ENCODE measurements at regions of chr10 and their contacts with region 1.

Region 1: DNA sequence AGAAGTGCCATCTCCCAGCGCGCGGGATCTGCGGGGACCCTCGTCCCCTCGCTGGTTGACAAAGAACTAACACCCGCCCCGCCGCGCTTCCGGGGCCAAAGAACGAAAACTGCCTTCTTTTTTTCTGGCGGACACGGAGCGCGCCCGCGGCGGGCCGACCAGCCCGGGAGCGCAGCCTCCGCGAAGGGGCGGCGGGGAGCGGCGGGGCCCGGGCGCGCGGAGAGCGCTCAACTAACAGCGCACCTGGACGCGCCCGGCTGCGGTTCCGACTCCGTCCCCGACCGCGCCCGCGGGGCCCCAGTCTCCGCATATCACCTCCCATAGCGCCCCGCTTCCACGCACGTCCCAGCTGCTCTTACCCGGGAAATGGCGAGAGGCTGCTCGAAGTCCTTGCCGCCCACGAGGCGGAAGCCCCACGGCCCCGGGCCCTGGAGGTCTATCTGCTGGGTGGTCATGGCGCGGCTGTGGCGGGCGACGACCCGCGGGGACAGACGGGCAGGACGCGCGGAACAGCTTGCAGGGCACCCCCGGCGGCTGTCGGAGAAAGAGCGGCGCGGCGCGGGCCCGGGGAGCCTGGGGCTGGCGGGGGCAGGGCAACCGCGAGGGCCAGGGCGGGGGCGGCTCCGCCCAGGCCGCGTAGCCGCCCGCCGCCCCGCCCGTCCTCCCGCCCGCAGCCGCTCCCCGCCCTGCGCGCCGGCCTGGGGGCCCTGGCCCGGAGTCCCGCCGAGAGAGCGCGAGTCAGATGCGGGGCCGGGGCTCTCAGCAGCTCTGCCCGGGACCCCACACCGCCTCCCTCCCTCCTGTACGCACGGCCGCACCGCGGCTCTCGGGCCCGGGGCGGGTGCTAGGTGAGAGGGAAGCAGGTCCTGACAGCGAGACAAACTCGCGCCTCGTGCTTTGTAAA is at the start of gene PDLIM1:
- DNase-seq: peak; percentile 55
- ATAC-seq: peak; percentile 92
- H3K4me3 ChIP-seq: peak within 1 kb of the TSS; percentile 77 to 89 (median 88)
- H3K27ac ChIP-seq: peak within 1 kb of the TSS; percentile 83
- H3K4me1 ChIP-seq: peaks cover 57% of the 10 kb centered on the region
- H3K27me3 ChIP-seq: no peaks in the 10 kb centered on the region
- CTCF ChIP-seq: peak; percentile 50
- EP300 ChIP-seq: no peak
- POLR2A ChIP-seq: peak; percentile 56 to 71; a peak in 3 of 4 replicates
- RAD21 ChIP-seq: peak; percentile 74
- total RNA-seq, gene PDLIM1: 123 and 183 TPM in 2 replicates

Region 2: GRCh38 chr10:94757916-94758315 is 532.8 kb before region 1 on chr10:
- CTCF ChIA-PET with region 1: no interaction called
- POLR2A ChIA-PET with region 1: no interaction called
- in situ Hi-C with region 1: no loop called
- intact Hi-C with region 1: no loop called
- DNase-seq: no peak
- ATAC-seq: no peak
- H3K4me3 ChIP-seq: no peak overlapping the region
- H3K27ac ChIP-seq: no peak overlapping the region
- H3K4me1 ChIP-seq: no peaks in the 10 kb centered on the region
- H3K27me3 ChIP-seq: no peaks in the 10 kb centered on the region
- CTCF ChIP-seq: no peak
- EP300 ChIP-seq: no peak
- POLR2A ChIP-seq: no peak
- RAD21 ChIP-seq: no peak

Region 3: DNA sequence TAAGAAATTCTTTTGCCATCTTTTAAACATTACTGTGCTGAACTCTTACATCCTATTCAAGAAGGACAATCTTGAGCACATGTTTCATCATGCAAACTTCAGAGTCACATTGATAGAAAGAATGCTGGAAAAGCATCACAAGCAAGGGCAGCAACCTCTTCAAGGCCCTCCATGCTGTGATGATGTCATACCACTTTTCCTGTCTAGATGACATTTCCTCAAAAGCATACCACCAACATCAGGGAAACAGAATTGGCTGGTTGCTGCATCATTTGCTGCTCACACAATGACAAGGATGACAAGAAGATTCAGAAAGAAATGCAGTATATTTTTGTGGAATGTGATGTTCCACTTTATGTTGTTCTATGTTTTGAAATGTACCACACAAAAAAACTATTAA is 259.1 kb before region 1 on chr10:
- CTCF ChIA-PET with region 1: no interaction called
- POLR2A ChIA-PET with region 1: no interaction called
- in situ Hi-C with region 1: no loop called
- intact Hi-C with region 1: no loop called
- DNase-seq: no peak
- ATAC-seq: no peak
- H3K4me3 ChIP-seq: no peak overlapping the region
- H3K27ac ChIP-seq: no peak overlapping the region
- H3K4me1 ChIP-seq: no peaks in the 10 kb centered on the region
- H3K27me3 ChIP-seq: no peaks in the 10 kb centered on the region
- CTCF ChIP-seq: no peak
- EP300 ChIP-seq: no peak
- POLR2A ChIP-seq: no peak
- RAD21 ChIP-seq: no peak

Region 4: DNA sequence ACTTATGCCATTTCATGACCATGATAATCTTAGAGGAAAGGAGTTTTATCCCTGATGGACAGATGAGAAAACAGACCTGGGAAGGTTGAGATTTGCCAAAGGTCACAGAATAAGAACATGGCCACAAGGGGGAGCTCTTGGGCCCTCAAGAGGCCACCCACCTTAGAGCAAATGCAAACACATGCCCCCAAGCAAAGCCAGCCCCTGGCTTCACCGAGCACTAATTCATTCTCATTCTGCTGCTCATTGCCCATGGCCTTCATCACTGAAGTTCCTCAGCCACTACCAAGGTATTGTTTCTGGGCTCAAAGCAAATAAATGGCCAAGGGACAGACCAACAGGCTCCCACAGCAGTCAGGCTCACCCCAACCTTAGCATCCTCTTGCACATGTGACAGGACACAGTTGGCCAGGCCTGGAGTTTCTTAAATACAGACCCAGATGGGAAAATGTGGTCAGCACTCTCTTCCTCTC is 44.1 kb before region 1 on chr10:
- CTCF ChIA-PET with region 1: interaction called, 10 read pairs
- POLR2A ChIA-PET with region 1: no interaction called
- in situ Hi-C with region 1: loop called (anchors 5 kb)
- intact Hi-C with region 1: loop called (anchors 1 kb)
- DNase-seq: peak; percentile 62
- ATAC-seq: peak; percentile 76
- H3K4me3 ChIP-seq: no peak overlapping the region
- H3K27ac ChIP-seq: peak overlapping the region; percentile 21
- H3K4me1 ChIP-seq: peaks cover 19% of the 10 kb centered on the region
- H3K27me3 ChIP-seq: no peaks in the 10 kb centered on the region
- CTCF ChIP-seq: peak; percentile 83
- EP300 ChIP-seq: no peak
- POLR2A ChIP-seq: no peak
- RAD21 ChIP-seq: peak; percentile 84

Region 5: GRCh38 chr10:95279042-95279820 is 11.5 kb before region 1 on chr10:
- CTCF ChIA-PET with region 1: no interaction called
- POLR2A ChIA-PET with region 1: interaction called, 41 read pairs
- in situ Hi-C with region 1: no loop called
- intact Hi-C with region 1: no loop called
- DNase-seq: no peak
- ATAC-seq: no peak
- H3K4me3 ChIP-seq: no peak overlapping the region; a peak in 1 of 6 replicates
- H3K27ac ChIP-seq: peak overlapping the region; percentile 68
- H3K4me1 ChIP-seq: peaks cover 99% of the 10 kb centered on the region
- H3K27me3 ChIP-seq: no peaks in the 10 kb centered on the region
- CTCF ChIP-seq: no peak
- EP300 ChIP-seq: no peak
- POLR2A ChIP-seq: no peak
- RAD21 ChIP-seq: no peak

Region 6: GRCh38 chr10:95333997-95334804 is 43.5 kb after region 1 on chr10:
- CTCF ChIA-PET with region 1: no interaction called
- POLR2A ChIA-PET with region 1: no interaction called
- in situ Hi-C with region 1: no loop called
- intact Hi-C with region 1: loop called (anchors 5 kb)
- DNase-seq: no peak
- ATAC-seq: no peak
- H3K4me3 ChIP-seq: no peak overlapping the region
- H3K27ac ChIP-seq: no peak overlapping the region
- H3K4me1 ChIP-seq: peaks cover 76% of the 10 kb centered on the region
- H3K27me3 ChIP-seq: no peaks in the 10 kb centered on the region
- CTCF ChIP-seq: no peak
- EP300 ChIP-seq: no peak
- POLR2A ChIP-seq: no peak
- RAD21 ChIP-seq: no peak

Region 7: GRCh38 chr10:95346715-95347401 is 56.1 kb after region 1 on chr10:
- CTCF ChIA-PET with region 1: no interaction called
- POLR2A ChIA-PET with region 1: interaction called, 3 read pairs
- in situ Hi-C with region 1: no loop called
- intact Hi-C with region 1: loop called (anchors 5 kb)
- DNase-seq: peak; percentile 99
- ATAC-seq: peak; percentile 94
- H3K4me3 ChIP-seq: no peak overlapping the region
- H3K27ac ChIP-seq: peak overlapping the region; percentile 78
- H3K4me1 ChIP-seq: peaks cover 93% of the 10 kb centered on the region
- H3K27me3 ChIP-seq: no peaks in the 10 kb centered on the region
- CTCF ChIP-seq: no peak; the same call in 1 of the 2 replicates
- EP300 ChIP-seq: peak; percentile 85 to 96; a peak in 3 of 4 replicates
- POLR2A ChIP-seq: peak in 1 of 2 experiments; percentile 13; a peak in 1 of 4 replicates
- RAD21 ChIP-seq: 0 out of 2 replicates have a peak, but pooled peaks have one; percentile 31